ENCODE measurements at regions of chr16 and their contacts with region 1.

Region 1: DNA sequence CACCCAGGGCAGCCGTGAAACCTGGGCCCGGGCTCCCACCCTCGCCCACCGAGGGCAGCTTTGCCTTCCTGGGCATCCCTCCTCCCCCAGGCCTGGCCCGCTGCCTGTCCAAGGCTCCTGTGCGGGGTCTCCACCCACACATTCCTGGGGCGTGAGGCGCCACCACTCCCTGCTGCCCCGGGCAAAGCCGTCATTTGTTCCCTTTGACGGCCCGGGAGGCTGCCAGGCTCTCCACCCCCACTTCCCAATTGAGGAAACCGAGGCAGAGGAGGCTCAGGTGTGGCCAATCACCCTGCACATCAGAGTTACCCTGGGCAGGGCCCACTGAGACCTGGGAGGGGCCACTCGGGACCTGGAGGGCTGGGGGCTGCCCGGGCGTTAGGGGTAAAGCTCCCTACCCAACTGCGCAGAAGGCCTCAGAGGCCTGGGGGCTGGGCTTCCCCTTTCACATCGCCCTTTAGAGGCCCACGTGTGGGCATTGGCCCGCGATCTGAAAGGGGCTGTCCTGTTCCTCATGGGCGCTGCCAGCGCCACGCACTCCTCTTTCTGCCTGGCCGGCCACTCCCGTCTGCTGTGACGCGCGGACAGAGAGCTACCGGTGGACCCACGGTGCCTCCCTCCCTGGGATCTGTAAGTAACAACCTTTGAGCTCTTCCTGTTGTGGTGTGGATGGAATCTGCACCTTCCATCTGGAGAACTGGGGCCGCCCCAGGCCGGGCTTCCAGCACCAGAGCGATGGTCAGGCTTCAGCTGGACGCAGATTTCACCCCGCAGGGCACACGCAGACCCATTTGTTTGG is at the start of gene MSLN:
- DNase-seq: peak; percentile 51 to 92
- H3K4me3 ChIP-seq: no peak within 1 kb of the TSS
- H3K27ac ChIP-seq: no peak within 1 kb of the TSS
- H3K4me1 ChIP-seq: peaks cover 16% of the 10 kb centered on the region
- H3K27me3 ChIP-seq: no peaks in the 10 kb centered on the region
- CTCF ChIP-seq: no peak
- total RNA-seq, gene MSLN: 59.9 and 86.4 TPM in 2 replicates

Region 2: DNA sequence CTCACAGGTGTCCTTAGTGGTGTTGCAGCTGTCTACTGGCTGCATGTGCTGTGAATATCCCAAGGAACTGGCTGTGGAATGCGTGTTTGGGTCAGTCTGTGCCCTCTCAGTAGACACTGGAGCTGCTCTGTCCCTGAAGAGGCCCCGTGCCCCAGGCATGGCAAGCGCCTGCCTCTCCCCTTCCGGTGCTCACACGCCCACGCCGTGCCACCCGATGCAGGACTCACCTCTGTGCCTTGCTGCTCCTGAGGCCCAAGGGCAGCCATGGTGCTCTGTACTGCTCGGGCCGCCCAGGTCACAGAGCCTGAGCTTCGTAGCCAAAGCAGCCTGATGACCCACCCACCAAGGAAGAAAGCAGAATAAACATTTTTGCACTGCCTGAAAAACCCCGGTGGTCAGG is 495.0 kb before region 1 on chr16:
- CTCF ChIA-PET with region 1: no interaction called
- POLR2A ChIA-PET with region 1: no interaction called
- intact Hi-C with region 1: no loop called
- DNase-seq: no peak
- H3K4me3 ChIP-seq: no peak overlapping the region
- H3K27ac ChIP-seq: no peak overlapping the region
- H3K4me1 ChIP-seq: no peaks in the 10 kb centered on the region
- H3K27me3 ChIP-seq: no peaks in the 10 kb centered on the region; the same call in 1 of the 2 replicates
- CTCF ChIP-seq: no peak

Region 3: DNA sequence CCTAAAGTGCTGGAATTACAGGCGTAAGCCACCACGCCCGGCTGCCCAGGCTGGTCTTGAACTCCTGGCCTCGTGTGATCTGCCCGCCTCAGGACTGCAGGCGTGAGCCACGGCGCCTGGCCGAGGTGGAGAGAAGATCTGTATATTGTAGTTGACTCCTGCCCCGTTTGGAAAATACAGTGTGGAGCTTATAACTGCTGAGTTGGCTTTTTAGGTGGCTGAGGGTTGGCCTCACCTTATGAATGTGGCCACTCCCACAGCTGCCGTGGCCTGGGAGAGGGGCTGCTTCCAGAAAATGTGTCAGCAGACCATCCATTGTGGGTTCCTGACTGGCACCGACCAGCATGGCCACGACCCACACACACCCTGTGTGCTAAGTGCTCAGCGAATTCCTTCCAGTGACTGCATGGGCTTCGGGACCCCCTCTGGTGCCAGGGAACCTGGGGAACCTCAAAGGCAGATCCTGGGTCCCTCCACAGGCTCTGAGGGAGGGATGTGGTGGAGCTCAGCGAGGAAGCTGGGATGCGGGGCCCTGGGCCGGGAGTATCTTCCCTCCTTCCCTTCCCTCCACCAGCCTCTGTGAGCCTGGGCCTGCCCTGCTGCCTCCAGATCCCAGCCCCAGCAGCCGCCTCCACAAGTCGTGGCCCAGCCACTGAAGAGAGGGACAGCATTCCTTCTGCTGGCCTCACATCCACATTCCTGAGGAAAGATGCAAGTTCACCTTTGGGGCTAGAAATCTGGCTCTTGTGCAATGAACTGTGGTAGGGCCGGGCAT is 346.2 kb before region 1 on chr16:
- CTCF ChIA-PET with region 1: no interaction called
- POLR2A ChIA-PET with region 1: no interaction called
- intact Hi-C with region 1: no loop called
- DNase-seq: peak; percentile 36 to 65
- H3K4me3 ChIP-seq: no peak overlapping the region
- H3K27ac ChIP-seq: no peak overlapping the region
- H3K4me1 ChIP-seq: no peaks in the 10 kb centered on the region
- H3K27me3 ChIP-seq: no peaks in the 10 kb centered on the region
- CTCF ChIP-seq: no peak

Region 4: DNA sequence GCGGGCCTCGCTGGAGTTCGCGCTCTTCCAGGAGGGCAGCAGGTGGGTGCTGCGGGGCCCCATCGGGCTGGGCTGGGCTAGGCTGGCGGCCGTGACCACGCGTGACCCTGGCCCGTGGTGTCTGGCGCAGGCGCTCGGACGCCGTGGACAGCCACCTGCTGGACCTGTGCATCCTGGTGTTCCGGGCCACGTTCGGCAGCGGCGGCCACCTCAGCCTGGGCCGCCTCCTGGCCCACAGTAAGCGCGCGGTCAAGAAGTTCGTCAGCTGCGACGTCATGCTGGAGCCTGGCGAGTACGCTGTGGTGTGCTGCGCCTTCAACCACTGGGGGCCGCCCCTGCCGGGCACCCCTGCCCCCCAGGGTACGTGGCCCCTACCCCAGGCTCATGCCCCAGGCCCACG is 208.6 kb before region 1 on chr16:
- CTCF ChIA-PET with region 1: no interaction called
- POLR2A ChIA-PET with region 1: interaction called, 15 read pairs
- intact Hi-C with region 1: no loop called
- DNase-seq: no peak
- H3K4me3 ChIP-seq: no peak overlapping the region
- H3K27ac ChIP-seq: no peak overlapping the region
- H3K4me1 ChIP-seq: no peaks in the 10 kb centered on the region
- H3K27me3 ChIP-seq: no peaks in the 10 kb centered on the region
- CTCF ChIP-seq: no peak

Region 5: GRCh38 chr16:585351-585750 is 175.4 kb before region 1 on chr16:
- CTCF ChIA-PET with region 1: no interaction called
- POLR2A ChIA-PET with region 1: no interaction called
- intact Hi-C with region 1: no loop called
- DNase-seq: peak in 1 of 2 experiments; percentile 47
- H3K4me3 ChIP-seq: no peak overlapping the region
- H3K27ac ChIP-seq: no peak overlapping the region
- H3K4me1 ChIP-seq: peaks cover 6% of the 10 kb centered on the region
- H3K27me3 ChIP-seq: no peaks in the 10 kb centered on the region
- CTCF ChIP-seq: 0 out of 2 replicates have a peak, but pooled peaks have one; percentile 24

Region 6: DNA sequence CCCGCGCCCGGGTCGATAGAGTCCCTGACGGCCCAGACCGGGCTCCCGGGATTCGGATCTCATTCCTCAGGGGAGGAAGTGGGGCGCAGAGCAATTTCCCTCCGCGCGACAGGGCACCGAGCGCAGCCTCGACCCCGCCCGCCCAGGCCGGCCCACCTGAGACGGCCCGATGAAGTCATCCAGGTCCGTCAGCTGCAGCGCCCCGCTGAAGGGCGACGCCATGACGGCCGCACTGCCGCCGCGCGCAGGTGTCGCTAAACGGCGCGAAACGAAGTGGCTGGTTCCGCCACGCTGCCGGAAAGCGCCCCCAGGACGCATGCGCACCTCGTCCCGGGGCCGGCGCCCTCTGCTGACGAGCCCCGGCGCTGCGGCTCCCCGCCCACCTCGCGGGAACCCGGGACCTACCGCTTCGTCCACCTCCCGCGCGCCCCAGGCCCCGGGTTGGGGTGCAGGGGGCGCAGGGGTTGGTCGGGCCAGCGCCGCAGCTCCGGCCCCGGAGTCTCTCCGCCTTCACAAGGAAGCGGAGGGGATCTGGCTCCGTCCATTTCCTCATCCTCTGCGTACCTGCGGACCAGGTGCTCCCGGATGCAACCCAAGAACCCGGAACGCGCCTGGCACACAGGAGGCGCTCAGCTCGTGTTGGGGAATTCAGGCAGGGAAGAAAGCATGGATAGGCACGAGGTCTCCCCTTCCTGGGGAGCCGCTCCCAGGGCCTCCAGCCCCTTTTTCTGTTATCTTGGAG is 19.8 kb before region 1 on chr16 and contains the start of gene CIAO3:
- CTCF ChIA-PET with region 1: interaction called, 5 read pairs
- POLR2A ChIA-PET with region 1: interaction called, 3 read pairs
- intact Hi-C with region 1: loop called (anchors 2 kb)
- DNase-seq: peak; percentile 78 to 96
- H3K4me3 ChIP-seq: peak within 1 kb of the TSS; percentile 91
- H3K27ac ChIP-seq: peak within 1 kb of the TSS; percentile 34; the same call in 1 of the 2 replicates
- H3K4me1 ChIP-seq: no peaks in the 10 kb centered on the region; the same call in 1 of the 2 replicates
- H3K27me3 ChIP-seq: no peaks in the 10 kb centered on the region
- CTCF ChIP-seq: peak; percentile 82
- total RNA-seq, gene CIAO3: 44.2 and 45.8 TPM in 2 replicates

Region 7: DNA sequence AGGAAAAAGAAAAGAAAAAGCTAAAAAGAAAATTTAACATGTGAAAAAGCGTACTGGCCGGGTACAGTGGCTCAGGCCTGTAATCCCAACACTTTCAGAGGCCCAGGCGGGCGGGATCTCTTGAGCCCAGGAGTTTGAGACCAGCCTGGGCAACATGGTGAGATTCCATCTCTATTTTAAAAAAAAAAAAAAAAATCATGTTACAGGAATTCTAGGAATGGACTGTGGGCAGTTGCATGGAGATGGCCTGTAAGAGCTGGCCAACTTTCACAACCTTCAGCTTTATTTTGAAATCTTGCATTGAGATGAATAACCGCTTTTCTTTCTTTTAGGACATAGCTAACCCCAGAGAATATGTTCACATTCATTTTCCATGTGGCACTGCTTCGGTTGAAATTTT is 11.7 kb before region 1 on chr16:
- CTCF ChIA-PET with region 1: no interaction called
- POLR2A ChIA-PET with region 1: interaction called, 23 read pairs
- intact Hi-C with region 1: no loop called
- DNase-seq: peak in 1 of 2 experiments; percentile 50
- H3K4me3 ChIP-seq: no peak overlapping the region
- H3K27ac ChIP-seq: no peak overlapping the region
- H3K4me1 ChIP-seq: no peaks in the 10 kb centered on the region
- H3K27me3 ChIP-seq: no peaks in the 10 kb centered on the region
- CTCF ChIP-seq: no peak

Region 8: GRCh38 chr16:777826-778225 is 17.1 kb after region 1 on chr16:
- CTCF ChIA-PET with region 1: no interaction called
- POLR2A ChIA-PET with region 1: interaction called, 8 read pairs
- intact Hi-C with region 1: loop called (anchors 2 kb)
- DNase-seq: peak in 1 of 2 experiments; percentile 62
- H3K4me3 ChIP-seq: no peak overlapping the region
- H3K27ac ChIP-seq: no peak overlapping the region
- H3K4me1 ChIP-seq: no peaks in the 10 kb centered on the region
- H3K27me3 ChIP-seq: peaks cover 30% of the 10 kb centered on the region
- CTCF ChIP-seq: no peak

Measured in PC-9 (cell line).